ENCODE measurements at regions of chr10 and their contacts with region 1.

Region 1: DNA sequence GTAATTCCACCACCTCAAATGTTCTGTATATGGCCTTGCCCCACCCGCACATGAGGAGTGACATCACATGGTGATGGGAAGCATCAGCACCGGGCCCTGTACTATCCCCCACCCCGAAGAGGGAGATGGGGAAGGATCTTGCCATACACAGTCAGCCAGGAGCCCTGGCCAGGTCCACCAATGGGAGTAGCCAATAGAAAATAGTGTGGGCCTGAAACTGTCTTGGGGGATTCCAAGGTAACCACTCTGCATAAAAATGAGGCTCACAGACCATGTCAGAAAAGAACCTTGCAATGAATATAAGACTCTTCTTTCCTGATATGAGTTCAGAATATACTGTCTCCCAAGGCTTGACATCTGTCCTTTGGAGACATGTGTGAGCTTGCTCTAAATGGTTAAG is 51.1 kb downstream of the ADRB1 start:
- DNase-seq: no peak

Region 2: DNA sequence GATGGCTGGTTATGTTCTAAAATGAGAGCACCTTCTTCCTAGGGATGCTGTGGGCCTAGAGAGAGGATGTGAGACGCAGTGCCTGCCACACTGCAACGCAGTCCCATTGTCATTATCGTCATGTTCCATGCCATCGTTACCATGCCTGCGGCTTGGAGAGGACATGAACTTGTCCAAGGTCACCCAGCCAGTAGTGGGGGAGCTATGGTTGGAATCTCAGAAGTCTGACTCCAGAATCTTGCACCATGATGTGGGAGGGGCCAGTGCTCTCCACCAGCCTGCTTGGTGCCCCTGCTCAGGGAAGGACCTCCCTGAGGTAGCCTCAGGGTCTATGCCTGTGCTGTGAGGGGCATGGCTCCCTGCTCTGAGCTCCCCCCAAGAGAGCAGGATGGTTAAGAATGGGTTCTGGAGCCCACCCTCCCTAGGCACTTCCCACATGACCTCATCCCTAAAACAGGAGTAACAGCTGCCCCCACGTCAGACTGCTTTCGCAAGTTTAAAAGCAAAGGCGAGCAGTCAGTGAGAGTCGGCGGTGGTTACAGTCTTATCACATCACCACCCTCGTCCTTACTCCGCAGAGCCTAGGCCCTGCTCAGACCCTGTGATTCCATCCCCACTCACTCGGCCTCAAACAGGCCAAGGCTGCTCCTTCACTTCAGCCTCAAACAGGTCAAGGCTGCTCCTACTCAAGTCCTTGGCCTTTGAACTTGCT is 491.6 kb before region 1 on chr10:
- intact Hi-C with region 1: loop called in 1 of 2 experiments (anchors 5 kb)
- DNase-seq: no peak